GM12878 (cell line): ENCODE measurements at regions of chr6 and their contacts with region 1.

Region 1: DNA sequence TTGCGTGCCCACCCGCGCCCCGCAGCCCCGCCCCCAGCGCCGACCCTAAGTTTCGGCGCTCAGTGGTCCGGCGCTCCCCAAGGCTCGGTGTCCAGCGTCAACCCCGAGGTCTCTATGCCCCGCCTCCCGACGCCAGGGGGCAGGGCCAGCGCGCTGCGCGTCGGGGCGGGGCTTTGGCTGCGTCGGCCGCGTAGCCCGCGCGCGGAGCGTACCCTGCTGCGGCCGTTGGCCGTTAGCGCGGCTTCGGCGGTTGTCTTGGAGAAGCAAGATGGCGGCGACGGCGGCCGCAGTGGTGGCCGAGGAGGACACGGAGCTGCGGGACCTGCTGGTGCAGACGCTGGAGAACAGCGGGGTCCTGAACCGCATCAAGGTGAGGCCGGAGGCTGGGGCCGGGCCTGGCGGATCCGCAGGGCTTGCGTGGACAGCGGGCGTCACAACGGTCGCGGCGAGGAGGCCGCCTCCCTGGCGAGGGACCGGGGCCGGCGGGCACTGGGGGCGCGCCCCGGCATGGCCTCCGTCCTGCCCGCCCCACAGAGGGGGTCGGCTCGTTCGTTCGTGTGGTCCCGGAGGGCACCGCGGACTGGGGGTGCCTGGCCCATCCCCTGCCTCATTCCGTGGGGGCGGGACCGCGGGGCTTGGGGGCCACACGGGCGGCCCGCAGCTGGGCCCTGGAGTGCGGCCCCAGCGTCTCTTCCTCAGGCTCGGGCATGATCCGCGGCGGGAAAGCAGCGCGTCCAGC is at the start of gene CEP43:
- DNase-seq: peak; percentile 71
- ATAC-seq: peak; percentile 92
- H3K4me3 ChIP-seq: peak within 1 kb of the TSS; percentile 91
- H3K27ac ChIP-seq: peak within 1 kb of the TSS; percentile 69
- H3K4me1 ChIP-seq: peaks cover 3% of the 10 kb centered on the region; the same call in 1 of the 2 replicates
- H3K27me3 ChIP-seq: no peaks in the 10 kb centered on the region
- CTCF ChIP-seq: no peak
- EP300 ChIP-seq: no peak
- POLR2A ChIP-seq: peak; percentile 73
- RAD21 ChIP-seq: no peak
- polyA plus RNA-seq, gene CEP43: 7.7 to 11.4 TPM

Region 2: GRCh38 chr6:166877906-166878305 is 121.4 kb before region 1 on chr6:
- CTCF ChIA-PET with region 1: no interaction called
- POLR2A ChIA-PET with region 1: no interaction called
- RAD21 ChIA-PET with region 1: no interaction called
- SMC1A ChIA-PET with region 1: no interaction called
- in situ Hi-C with region 1: no loop called
- intact Hi-C with region 1: no loop called
- DNase-seq: no peak
- ATAC-seq: no peak
- H3K4me3 ChIP-seq: no peak overlapping the region
- H3K27ac ChIP-seq: no peak overlapping the region
- H3K4me1 ChIP-seq: no peaks in the 10 kb centered on the region
- H3K27me3 ChIP-seq: no peaks in the 10 kb centered on the region
- CTCF ChIP-seq: no peak
- EP300 ChIP-seq: no peak
- POLR2A ChIP-seq: no peak
- RAD21 ChIP-seq: no peak

Region 3: GRCh38 chr6:166950443-166950821 is 48.9 kb before region 1 on chr6:
- CTCF ChIA-PET with region 1: interaction called, 7 read pairs
- POLR2A ChIA-PET with region 1: interaction called, 9 read pairs
- RAD21 ChIA-PET with region 1: interaction called, 25 read pairs
- SMC1A ChIA-PET with region 1: interaction called, 14 read pairs
- in situ Hi-C with region 1: no loop called
- intact Hi-C with region 1: loop called (anchors 2 kb)
- DNase-seq: no peak
- ATAC-seq: peak; percentile 68
- H3K4me3 ChIP-seq: peak overlapping the region; percentile 71
- H3K27ac ChIP-seq: peak overlapping the region; percentile 96
- H3K4me1 ChIP-seq: peaks cover 42% of the 10 kb centered on the region
- H3K27me3 ChIP-seq: no peaks in the 10 kb centered on the region
- CTCF ChIP-seq: no peak
- EP300 ChIP-seq: no peak
- POLR2A ChIP-seq: peak; percentile 76
- RAD21 ChIP-seq: no peak

Region 4: DNA sequence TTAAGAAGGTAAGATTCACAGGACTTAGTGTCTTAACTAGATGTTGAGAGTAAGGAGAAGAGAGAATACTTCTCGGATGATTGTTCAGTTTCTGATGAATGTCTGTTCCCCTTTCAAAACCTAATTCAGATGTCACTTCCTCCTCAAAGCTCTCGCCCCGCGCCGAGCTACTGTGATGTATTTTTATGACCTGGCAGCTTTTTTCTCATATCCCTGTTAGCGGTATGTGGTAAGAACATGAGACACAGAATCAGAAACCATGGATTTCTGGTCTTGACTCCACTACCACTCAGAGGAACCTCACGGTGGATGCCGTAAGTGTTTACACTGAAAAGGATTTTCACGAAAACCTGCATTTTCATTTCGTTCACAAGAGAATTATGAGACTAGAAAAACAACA is 48.2 kb after region 1 on chr6:
- CTCF ChIA-PET with region 1: interaction called, 8 read pairs
- POLR2A ChIA-PET with region 1: interaction called, 7 read pairs
- RAD21 ChIA-PET with region 1: interaction called, 15 read pairs
- SMC1A ChIA-PET with region 1: interaction called, 9 read pairs
- in situ Hi-C with region 1: no loop called
- intact Hi-C with region 1: loop called (anchors 2 kb)
- DNase-seq: peak; percentile 86
- ATAC-seq: peak; percentile 87
- H3K4me3 ChIP-seq: peak overlapping the region; percentile 36; the same call in 1 of the 2 replicates
- H3K27ac ChIP-seq: peak overlapping the region; percentile 89
- H3K4me1 ChIP-seq: peaks cover 36% of the 10 kb centered on the region
- H3K27me3 ChIP-seq: no peaks in the 10 kb centered on the region
- CTCF ChIP-seq: no peak
- EP300 ChIP-seq: peak; percentile 74 to 77; a peak in 3 of 4 replicates
- POLR2A ChIP-seq: no peak
- RAD21 ChIP-seq: no peak

Region 5: DNA sequence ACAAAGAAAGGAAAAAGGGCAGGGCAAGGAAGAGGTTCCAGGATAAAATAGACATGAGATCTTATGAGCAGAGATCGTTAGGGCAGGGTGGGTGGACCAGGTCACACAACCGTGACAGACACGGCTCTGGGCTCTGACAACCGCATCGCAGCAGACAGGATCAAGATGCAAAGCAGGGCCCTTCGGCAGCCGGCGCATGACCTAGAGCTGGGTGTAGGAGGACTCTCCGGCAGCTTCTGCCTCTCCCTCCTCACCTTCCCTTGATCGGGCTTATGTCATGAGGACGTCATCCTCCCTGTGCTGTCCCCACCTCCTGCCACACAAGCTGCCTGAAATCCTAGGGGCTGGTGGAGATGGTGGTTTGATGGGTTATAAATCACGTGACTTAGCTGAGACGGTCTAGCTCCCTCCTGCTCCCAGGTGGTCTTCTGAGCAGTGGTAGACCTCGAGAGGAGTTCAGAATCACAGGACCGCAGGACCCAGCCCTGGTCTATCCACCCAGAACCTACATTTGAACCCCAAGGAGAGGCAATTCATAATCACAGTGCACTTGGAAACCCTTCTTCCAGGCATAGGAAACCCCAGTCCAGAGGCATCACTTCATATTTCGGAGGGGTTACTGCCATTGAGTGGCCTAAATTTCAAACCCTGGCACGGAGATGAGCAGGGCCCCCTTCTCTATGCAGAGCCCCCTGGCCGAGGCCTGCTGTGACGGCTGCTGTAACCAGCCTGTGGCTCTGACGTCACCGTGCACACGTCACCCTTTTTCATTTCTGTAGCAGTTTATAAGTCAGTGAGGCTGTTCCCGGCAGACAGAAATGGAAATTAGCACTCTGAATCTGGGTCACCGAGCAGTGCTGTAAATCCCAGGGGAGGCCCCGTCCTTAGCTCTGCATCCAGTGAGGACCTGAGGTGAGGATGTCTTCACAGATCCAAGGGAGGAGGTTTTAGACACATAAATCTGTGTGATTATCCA is 114.9 kb after region 1 on chr6:
- CTCF ChIA-PET with region 1: interaction called, 14 read pairs
- POLR2A ChIA-PET with region 1: interaction called, 6 read pairs
- RAD21 ChIA-PET with region 1: interaction called, 60 read pairs
- SMC1A ChIA-PET with region 1: interaction called, 55 read pairs
- in situ Hi-C with region 1: no loop called
- intact Hi-C with region 1: no loop called
- DNase-seq: peak; percentile 93
- ATAC-seq: peak; percentile 90
- H3K4me3 ChIP-seq: peak overlapping the region; percentile 30; the same call in 1 of the 2 replicates
- H3K27ac ChIP-seq: peak overlapping the region; percentile 94
- H3K4me1 ChIP-seq: peaks cover 54% of the 10 kb centered on the region
- H3K27me3 ChIP-seq: no peaks in the 10 kb centered on the region
- CTCF ChIP-seq: no peak
- EP300 ChIP-seq: peak; percentile 83 to 91
- POLR2A ChIP-seq: peak; percentile 65
- RAD21 ChIP-seq: 0 out of 2 replicates have a peak, but pooled peaks have one; percentile 1

Region 6: DNA sequence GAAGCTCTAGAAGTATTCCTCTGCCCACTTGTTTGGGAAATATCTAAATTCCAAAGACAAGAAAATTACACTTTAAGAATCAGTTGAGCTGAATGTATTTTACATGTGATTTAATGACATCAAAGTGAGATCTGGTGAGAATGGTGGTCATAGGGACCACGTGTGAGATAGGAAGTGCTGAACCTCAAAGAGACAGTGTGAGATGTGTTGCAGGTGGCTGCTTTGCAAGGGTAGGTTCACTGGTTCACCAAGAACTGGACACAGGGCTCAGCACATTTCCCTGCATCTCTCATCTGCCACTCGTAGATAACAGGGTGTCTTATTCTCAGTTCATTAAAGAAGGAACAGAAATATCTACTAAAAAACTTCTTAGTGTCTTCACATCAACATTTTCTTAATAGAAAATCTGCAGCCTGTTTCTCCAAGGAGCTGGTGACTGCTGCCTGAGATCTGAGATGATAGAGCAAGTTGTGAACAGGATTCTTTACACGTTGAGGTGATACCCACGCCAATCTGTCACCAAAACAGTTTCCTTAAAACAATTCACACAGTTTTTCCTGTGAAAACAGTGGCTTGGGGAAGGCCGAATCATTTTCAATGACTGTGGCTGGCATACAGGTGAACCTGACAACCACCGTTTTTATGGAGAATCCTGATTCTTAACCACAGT is 130.8 kb after region 1 on chr6:
- CTCF ChIA-PET with region 1: interaction called, 15 read pairs
- POLR2A ChIA-PET with region 1: interaction called, 3 read pairs
- RAD21 ChIA-PET with region 1: interaction called, 60 read pairs
- SMC1A ChIA-PET with region 1: interaction called, 32 read pairs
- in situ Hi-C with region 1: loop called (anchors 25 kb)
- intact Hi-C with region 1: no loop called
- DNase-seq: no peak
- ATAC-seq: peak; percentile 71
- H3K4me3 ChIP-seq: peak overlapping the region; percentile 1; the same call in 1 of the 2 replicates
- H3K27ac ChIP-seq: peak overlapping the region; percentile 47
- H3K4me1 ChIP-seq: peaks cover 21% of the 10 kb centered on the region
- H3K27me3 ChIP-seq: no peaks in the 10 kb centered on the region
- CTCF ChIP-seq: no peak
- EP300 ChIP-seq: no peak
- POLR2A ChIP-seq: no peak
- RAD21 ChIP-seq: no peak

Region 7: DNA sequence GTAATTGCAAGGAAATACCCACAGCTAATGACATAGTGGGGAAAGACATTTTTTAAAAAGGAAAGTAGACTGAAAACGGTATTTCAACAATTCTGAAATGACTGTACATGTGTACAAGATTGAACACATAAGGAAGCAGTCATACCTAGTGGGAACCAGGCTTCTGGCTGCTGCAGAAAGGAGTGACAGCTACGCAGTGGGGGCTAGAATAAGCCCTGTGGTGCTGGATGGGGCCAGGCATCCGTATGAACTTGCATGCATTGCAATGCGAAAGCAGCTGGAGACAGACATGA is 213.3 kb after region 1 on chr6:
- CTCF ChIA-PET with region 1: no interaction called
- POLR2A ChIA-PET with region 1: no interaction called
- RAD21 ChIA-PET with region 1: no interaction called
- SMC1A ChIA-PET with region 1: no interaction called
- in situ Hi-C with region 1: no loop called
- intact Hi-C with region 1: no loop called
- DNase-seq: no peak
- ATAC-seq: peak; percentile 83
- H3K4me3 ChIP-seq: no peak overlapping the region
- H3K27ac ChIP-seq: no peak overlapping the region
- H3K4me1 ChIP-seq: peaks cover 5% of the 10 kb centered on the region; the same call in 1 of the 2 replicates
- H3K27me3 ChIP-seq: peaks cover 0 to 1% of the 10 kb centered on the region in 2 experiments; a peak in 2 of 4 replicates
- CTCF ChIP-seq: no peak
- EP300 ChIP-seq: no peak
- POLR2A ChIP-seq: no peak
- RAD21 ChIP-seq: no peak